ENCODE measurements at regions of chr4 and their contacts with region 1.

Region 1: DNA sequence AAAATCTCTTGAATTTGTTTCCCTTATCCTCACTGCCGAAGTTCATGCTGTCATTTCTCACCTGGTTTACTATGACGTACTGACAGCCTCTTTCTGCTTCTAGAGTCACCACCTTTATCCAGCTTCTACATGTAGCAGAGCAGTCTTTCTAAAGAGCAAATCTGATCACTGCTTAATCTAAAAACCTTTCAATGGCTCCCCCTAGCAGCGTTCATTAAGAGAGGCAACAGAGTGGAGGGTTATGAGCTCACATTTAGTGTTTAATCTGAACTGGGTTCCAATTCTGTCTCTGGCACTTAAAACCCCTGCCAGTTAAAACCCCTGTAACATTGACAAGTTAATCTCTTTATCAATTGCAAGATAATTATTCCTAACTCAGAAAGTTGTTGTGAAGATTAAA is 4.4 kb downstream of the RBPJ start:
- DNase-seq: peak; percentile 36
- ATAC-seq: peak; percentile 28
- H3K4me3 Mint-ChIP-seq: peak overlapping the region; percentile 40
- H3K27ac Mint-ChIP-seq: peak overlapping the region; percentile 22
- H3K4me1 Mint-ChIP-seq: peaks cover 40% of the 10 kb centered on the region
- H3K27me3 Mint-ChIP-seq: no peaks in the 10 kb centered on the region
- CTCF ChIP-seq: peak; percentile 63

Region 2: GRCh38 chr4:26028793-26029567 is 296.2 kb before region 1 on chr4:
- CTCF ChIA-PET with region 1: interaction called, 20 read pairs
- POLR2A ChIA-PET with region 1: no interaction called
- intact Hi-C with region 1: no loop called
- DNase-seq: peak; percentile 74
- ATAC-seq: peak; percentile 99
- H3K4me3 Mint-ChIP-seq: no peak overlapping the region
- H3K27ac Mint-ChIP-seq: no peak overlapping the region
- H3K4me1 Mint-ChIP-seq: peaks cover 9% of the 10 kb centered on the region
- H3K27me3 Mint-ChIP-seq: peaks cover 18% of the 10 kb centered on the region
- CTCF ChIP-seq: peak; percentile 80

Region 3: DNA sequence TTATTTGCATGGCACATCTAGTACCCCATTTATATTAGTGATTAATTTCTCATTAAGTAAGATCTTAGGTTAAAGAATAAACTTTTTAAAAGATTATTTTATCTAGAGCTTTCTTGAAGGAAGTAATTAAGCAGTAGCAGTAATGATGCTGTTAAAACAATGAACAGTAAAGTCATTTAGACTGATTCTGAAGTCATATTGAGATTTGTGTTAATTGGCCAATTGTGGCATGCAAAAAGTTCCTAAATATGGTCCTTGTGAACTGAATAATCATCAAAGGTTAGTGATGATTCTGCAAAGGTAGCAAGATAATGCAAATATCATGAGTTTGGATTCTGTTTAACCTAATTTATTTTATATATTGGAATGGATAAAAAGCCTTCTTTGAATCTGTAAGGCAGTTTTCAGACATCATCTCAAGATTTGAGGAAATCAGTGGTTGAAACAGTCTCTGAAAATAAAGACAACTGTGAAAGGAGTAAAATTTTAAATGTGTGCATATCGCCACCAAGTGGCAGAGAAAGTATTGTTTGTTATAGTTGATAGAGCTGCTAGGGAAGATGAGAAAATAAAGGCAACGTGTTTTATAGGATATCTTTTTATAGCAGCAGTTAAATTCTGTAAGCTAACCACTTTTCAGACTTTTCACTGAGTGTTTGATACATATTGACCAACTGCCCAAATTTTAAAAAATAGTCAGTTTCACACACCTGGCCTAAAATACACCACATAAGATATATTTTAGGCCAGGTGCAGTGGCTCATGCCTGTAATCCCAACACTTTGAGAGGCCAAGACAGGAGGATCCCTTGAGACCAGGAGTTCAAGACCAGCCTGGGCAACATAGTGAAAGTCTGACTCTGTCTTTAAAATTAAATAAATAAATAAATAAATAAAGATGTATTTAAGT is 85.4 kb after region 1 on chr4:
- CTCF ChIA-PET with region 1: interaction called, 116 read pairs
- POLR2A ChIA-PET with region 1: interaction called, 3 read pairs
- intact Hi-C with region 1: loop called (anchors 1 kb)
- DNase-seq: peak; percentile 33
- ATAC-seq: peak; percentile 61
- H3K4me3 Mint-ChIP-seq: no peak overlapping the region
- H3K27ac Mint-ChIP-seq: no peak overlapping the region
- H3K4me1 Mint-ChIP-seq: peaks cover 7% of the 10 kb centered on the region
- H3K27me3 Mint-ChIP-seq: no peaks in the 10 kb centered on the region
- CTCF ChIP-seq: peak; percentile 85

Region 4: DNA sequence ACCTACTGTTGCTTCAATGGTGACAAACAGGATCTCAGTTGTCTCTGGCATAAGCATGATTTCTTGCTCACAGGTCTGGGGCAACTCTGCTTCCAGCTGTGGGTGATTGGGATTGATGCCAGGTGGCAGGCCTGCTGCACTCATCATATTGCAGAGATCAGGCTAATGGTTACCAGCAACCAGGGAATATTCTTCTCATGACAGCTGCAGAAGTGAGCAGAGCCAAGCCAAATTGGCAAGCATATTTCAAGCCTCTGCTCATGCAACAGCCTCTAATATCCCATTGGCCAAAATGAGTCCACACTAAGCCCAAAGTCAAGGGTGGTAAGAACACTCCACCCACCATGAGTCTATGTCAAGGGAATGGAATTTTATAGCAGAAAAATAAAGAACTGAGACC is 232.0 kb after region 1 on chr4:
- CTCF ChIA-PET with region 1: no interaction called
- POLR2A ChIA-PET with region 1: no interaction called
- intact Hi-C with region 1: no loop called
- DNase-seq: no peak
- ATAC-seq: no peak
- H3K4me3 Mint-ChIP-seq: no peak overlapping the region
- H3K27ac Mint-ChIP-seq: no peak overlapping the region
- H3K4me1 Mint-ChIP-seq: no peaks in the 10 kb centered on the region
- H3K27me3 Mint-ChIP-seq: peaks cover 16% of the 10 kb centered on the region
- CTCF ChIP-seq: no peak

Measured in activated CD8-positive, alpha-beta T cell treated with anti-CD3 and anti-CD28 coated beads for 36 hours (primary cell).